ENCODE measurements at regions of chr20 and their contacts with region 1.

Region 1: GRCh38 chr20:58890518-58891085 is 38.1 kb downstream of the GNAS start:
- DNase-seq: peak; percentile 86 to 91 (median 88)
- H3K4me3 ChIP-seq: peak overlapping the region; percentile 83
- H3K27ac ChIP-seq: peak overlapping the region; percentile 96 to 98
- H3K4me1 ChIP-seq: peaks cover 4% of the 10 kb centered on the region
- H3K27me3 ChIP-seq: no peaks in the 10 kb centered on the region
- CTCF ChIP-seq: no peak
- EP300 ChIP-seq: no peak
- POLR2A ChIP-seq: no peak

Region 2: GRCh38 chr20:59006864-59007664 is 116.5 kb after region 1 on chr20 and contains the start of gene CTSZ:
- intact Hi-C with region 1: loop called in 1 of 4 experiments (anchors 10 kb)
- DNase-seq: peak; percentile 40 to 69 (median 54)
- H3K4me3 ChIP-seq: peak within 1 kb of the TSS; percentile 53
- H3K27ac ChIP-seq: peak within 1 kb of the TSS; percentile 50 to 61
- H3K4me1 ChIP-seq: peaks cover 10% of the 10 kb centered on the region
- H3K27me3 ChIP-seq: no peaks in the 10 kb centered on the region
- CTCF ChIP-seq: no peak
- EP300 ChIP-seq: no peak
- POLR2A ChIP-seq: no peak
- total RNA-seq, gene CTSZ: 36.7 to 117 (median 76.8) TPM

Region 3: DNA sequence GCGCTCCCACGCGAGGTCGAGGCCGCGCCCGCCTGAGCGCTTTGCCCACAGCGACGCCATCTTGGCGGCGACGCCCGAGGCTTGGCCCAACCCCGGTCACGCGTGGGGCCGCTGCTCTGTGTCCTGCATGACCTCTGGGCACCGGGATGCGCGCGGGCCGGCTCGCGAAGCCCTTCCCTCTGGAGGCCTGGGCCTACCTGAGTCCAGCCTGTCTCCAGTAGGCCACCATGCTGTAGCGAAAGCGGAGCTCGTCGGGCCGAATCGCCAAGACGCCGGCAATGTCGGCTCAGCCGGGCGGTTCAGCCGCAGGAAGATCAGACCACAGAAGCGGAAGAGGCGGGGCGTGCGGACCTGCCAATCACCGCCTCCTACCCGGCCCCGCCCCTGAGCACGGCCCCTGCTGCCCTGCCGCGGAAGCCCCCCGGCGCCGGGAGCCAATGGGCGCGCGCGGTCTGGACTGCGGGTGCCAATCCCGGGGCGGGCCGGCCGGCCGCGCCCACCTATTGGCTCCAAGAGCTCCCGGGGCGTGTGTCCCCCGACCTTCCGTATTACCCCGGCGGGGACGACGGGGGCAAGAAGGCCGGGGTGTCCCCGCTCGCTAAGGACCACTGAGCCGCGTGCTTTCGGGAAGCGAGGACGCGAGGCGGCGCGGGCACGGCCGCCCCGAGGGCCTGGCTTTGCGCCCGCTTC is 141.6 kb after region 1 on chr20 and contains the start of gene ATP5F1E:
- intact Hi-C with region 1: loop called in 1 of 4 experiments (anchors 5 kb)
- DNase-seq: peak; percentile 94 to 98 (median 95)
- H3K4me3 ChIP-seq: peak within 1 kb of the TSS; percentile 86
- H3K27ac ChIP-seq: peak within 1 kb of the TSS; percentile 68 to 70
- H3K4me1 ChIP-seq: peaks cover 6% of the 10 kb centered on the region
- H3K27me3 ChIP-seq: no peaks in the 10 kb centered on the region
- CTCF ChIP-seq: no peak
- EP300 ChIP-seq: no peak
- POLR2A ChIP-seq: peak; percentile 67
- total RNA-seq, gene ATP5F1E: 23.2 to 50.4 (median 45.4) TPM

Region 4: GRCh38 chr20:59042796-59043660 is 152.4 kb after region 1 on chr20:
- intact Hi-C with region 1: loop called in 1 of 4 experiments (anchors 5 kb)
- DNase-seq: peak; percentile 90 to 96 (median 93)
- H3K4me3 ChIP-seq: peak overlapping the region; percentile 94
- H3K27ac ChIP-seq: peak overlapping the region in 1 of 2 donors; percentile 69
- H3K4me1 ChIP-seq: peaks cover 8% of the 10 kb centered on the region
- H3K27me3 ChIP-seq: no peaks in the 10 kb centered on the region
- CTCF ChIP-seq: peak in 1 of 3 donors; percentile 7
- EP300 ChIP-seq: no peak
- POLR2A ChIP-seq: no peak

Region 5: DNA sequence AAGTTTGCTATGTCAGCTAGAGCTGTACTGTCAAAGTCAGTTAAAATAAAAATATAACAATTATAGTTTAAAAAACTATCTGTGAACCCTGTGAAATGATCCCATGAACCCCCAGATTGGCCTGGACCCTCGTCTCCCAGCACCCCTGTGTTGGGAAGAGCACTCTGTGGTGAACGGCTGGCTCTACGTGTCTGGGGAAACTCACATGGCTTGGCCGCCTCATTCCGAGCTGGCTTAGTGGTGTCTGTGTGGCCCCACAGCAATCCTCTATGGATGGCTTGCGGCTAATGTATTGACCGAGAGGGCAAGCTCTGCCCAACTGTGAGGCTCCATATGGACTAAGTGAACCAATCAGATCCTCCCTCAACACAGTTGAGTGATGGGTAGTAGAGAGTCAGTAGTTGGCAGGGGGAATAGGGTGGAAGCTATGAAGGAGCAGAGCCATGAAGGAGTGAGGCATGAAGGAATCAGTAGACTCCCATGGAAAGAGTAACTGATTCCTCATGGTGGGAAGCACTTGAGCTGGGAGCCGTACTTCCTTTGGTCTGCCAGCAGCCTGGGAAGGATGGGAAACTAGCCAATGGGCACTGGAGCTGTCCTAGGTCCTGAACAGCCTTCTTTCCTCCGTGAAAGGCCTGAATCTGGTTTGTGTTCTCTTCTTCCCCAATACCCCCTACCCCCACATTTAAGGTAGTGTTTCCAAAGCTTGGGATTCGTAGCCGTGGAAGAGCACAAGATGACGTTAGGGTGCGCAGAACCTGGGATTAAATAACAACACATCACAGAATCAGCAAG is 251.4 kb after region 1 on chr20:
- intact Hi-C with region 1: no loop called
- DNase-seq: no peak
- H3K4me3 ChIP-seq: no peak overlapping the region
- H3K27ac ChIP-seq: no peak overlapping the region
- H3K4me1 ChIP-seq: no peaks in the 10 kb centered on the region
- H3K27me3 ChIP-seq: no peaks in the 10 kb centered on the region
- CTCF ChIP-seq: no peak
- EP300 ChIP-seq: no peak
- POLR2A ChIP-seq: no peak